ENCODE measurements at regions of chr6 and their contacts with region 1.

Region 1: DNA sequence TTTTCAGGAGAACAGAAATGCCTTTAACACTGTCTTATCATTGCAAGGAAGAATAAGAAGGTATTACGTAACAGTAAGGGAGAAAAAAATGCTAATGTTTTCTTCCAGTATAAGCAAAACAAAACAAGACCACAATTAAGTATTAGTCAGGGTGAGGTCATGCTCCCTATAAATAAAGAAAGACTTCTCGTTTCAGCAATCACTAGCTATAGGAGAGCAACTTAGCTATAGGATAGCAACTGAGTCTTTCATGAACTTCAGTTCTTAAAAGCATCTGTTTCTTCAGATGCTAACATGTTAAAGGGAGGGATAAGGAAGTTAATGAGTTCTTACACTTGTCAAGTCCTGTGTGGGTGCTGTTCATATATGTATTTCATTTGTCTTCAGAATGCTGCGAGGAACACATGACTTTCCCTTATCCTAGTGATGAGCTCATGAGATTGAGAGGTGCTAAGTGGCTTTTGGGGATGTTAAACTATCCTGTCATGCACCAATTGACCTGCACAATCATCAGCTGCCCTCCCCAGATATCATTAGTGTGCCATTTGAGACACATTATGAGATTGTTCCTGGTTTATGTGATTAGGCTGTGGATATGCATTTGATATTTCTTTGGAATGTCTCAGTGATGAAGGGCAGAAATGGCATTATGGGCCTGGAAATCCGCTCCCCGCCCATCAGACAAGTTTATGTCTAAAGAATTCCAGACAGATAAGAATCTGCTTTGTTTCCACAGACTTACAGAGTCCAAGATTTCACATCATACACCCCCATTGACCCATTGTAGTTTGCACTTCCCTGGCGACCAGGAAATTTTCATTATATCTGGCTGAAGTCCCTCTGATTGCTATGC is 37.4 kb downstream of the LAMA4 start:
- DNase-seq: no peak
- ATAC-seq: peak; percentile 9 to 56 (median 14)
- H3K4me3 ChIP-seq: no peak overlapping the region
- H3K27ac ChIP-seq: peak overlapping the region; percentile 22 to 87 (median 52)
- H3K4me1 ChIP-seq: peaks cover 19 to 90% (median 74%) of the 10 kb centered on the region in 12 donors
- H3K27me3 ChIP-seq: no peaks in the 10 kb centered on the region
- CTCF ChIP-seq: no peak
- POLR2A ChIP-seq: no peak

Region 2: GRCh38 chr6:112087136-112087911 is 129.6 kb before region 1 on chr6 and contains the starts of genes FAM229B and TUBE1:
- intact Hi-C with region 1: no loop called
- DNase-seq: peak; percentile 93 to 97 (median 93)
- ATAC-seq: peak; percentile 89 to 97 (median 94)
- H3K4me3 ChIP-seq: peak within 1 kb of the TSS; percentile 62 to 88 (median 80)
- H3K27ac ChIP-seq: peak within 1 kb of the TSS; percentile 73 to 92 (median 86)
- H3K4me1 ChIP-seq: peaks cover 0 to 35% (median 17%) of the 10 kb centered on the region in 12 donors
- H3K27me3 ChIP-seq: no peaks in the 10 kb centered on the region
- CTCF ChIP-seq: peak in 1 of 12 donors; percentile 34
- POLR2A ChIP-seq: peak in 1 of 2 donors; percentile 91
- total RNA-seq, gene FAM229B: 33.7 to 77.7 (median 54.8) TPM
- total RNA-seq, gene TUBE1: 16.1 to 33.2 (median 25.0) TPM

Region 3: GRCh38 chr6:112237595-112237994 is 20.7 kb after region 1 on chr6:
- intact Hi-C with region 1: loop called in 1 of 10 experiments (anchors 2 kb)
- DNase-seq: peak in 4 of 5 donors; percentile 53 to 84 (median 70)
- ATAC-seq: peak in 3 of 4 donors; percentile 31 to 77 (median 70)
- H3K4me3 ChIP-seq: no peak overlapping the region
- H3K27ac ChIP-seq: peak overlapping the region; percentile 27 to 88 (median 82)
- H3K4me1 ChIP-seq: peaks cover 32 to 88% (median 76%) of the 10 kb centered on the region in 12 donors
- H3K27me3 ChIP-seq: no peaks in the 10 kb centered on the region
- CTCF ChIP-seq: no peak
- POLR2A ChIP-seq: no peak